Activated CD4-positive, alpha-beta T cell treated with anti-CD3 and anti-CD28 coated beads, Interleukin-2, amount 10 ng/mL, durations not matched to agents 24 days and 14 days (primary cell): ENCODE measurements at regions of chr5 and their contacts with region 1.

Region 1: DNA sequence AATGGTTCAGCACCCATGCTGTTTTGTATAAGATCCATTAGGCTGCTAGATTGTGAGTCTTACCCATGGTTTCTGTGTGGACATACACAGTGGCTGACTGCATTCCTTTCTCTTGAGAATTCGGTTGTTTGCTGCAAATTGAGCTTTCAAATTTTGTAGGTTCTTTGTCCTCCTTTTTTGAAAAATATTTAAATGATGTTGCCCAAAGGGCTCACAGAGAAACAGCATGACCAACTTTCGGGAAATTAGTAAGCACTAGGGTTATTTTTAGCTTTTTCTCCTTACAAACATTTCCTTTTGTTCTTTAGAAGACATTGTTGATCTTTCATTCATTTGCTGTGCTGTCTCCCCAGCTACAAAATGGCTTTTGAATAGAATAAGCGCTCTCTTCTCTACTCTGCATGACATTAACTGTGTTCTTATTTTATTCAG is 79.4 kb downstream of the NLN start:
- DNase-seq: no peak
- H3K4me3 Mint-ChIP-seq: no peak overlapping the region
- H3K27ac Mint-ChIP-seq: no peak overlapping the region
- H3K4me1 Mint-ChIP-seq: peaks cover 29% of the 10 kb centered on the region
- H3K27me3 Mint-ChIP-seq: no peaks in the 10 kb centered on the region

Region 2: DNA sequence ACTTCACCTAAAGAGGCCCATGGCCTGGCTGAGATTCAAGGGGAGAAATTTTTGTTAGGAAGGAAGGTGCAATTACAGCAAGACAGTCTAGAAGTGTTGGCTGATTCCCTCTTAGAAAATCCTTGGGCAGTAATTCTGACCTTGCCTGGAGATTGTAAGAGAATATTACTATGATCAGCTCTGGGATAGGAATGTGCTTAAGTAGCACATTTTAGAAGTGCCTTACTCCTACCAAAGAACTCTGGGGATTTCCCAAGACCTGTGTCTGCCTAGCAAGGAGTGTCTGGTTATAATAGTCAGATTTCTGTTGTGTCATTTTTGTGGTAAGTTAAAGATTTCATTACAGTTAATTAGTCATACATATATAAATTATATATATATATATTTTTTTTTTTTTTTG is 27.0 kb before region 1 on chr5:
- intact Hi-C with region 1: loop called (anchors 2 kb)
- DNase-seq: peak; percentile 65
- H3K4me3 Mint-ChIP-seq: no peak overlapping the region
- H3K27ac Mint-ChIP-seq: peak overlapping the region; percentile 1
- H3K4me1 Mint-ChIP-seq: peaks cover 19% of the 10 kb centered on the region
- H3K27me3 Mint-ChIP-seq: no peaks in the 10 kb centered on the region

Region 3: GRCh38 chr5:65779643-65780042 is 21.7 kb before region 1 on chr5:
- intact Hi-C with region 1: loop called (anchors 2 kb)
- DNase-seq: peak; percentile 70
- H3K4me3 Mint-ChIP-seq: peak overlapping the region; percentile 36
- H3K27ac Mint-ChIP-seq: peak overlapping the region; percentile 65
- H3K4me1 Mint-ChIP-seq: peaks cover 19% of the 10 kb centered on the region
- H3K27me3 Mint-ChIP-seq: no peaks in the 10 kb centered on the region